MCF 10A (cell line): ENCODE measurements at regions of chr6 and their contacts with region 1.

Region 1: GRCh38 chr6:136550330-136551071 is at the start of gene MAP7:
- DNase-seq: peak; percentile 86
- H3K4me3 Mint-ChIP-seq: peak within 1 kb of the TSS; percentile 72
- H3K27ac Mint-ChIP-seq: peak within 1 kb of the TSS; percentile 57
- H3K4me1 Mint-ChIP-seq: peaks cover 8% of the 10 kb centered on the region
- H3K27me3 Mint-ChIP-seq: no peaks in the 10 kb centered on the region
- CTCF ChIP-seq: peak; percentile 97
- total RNA-seq, gene MAP7: 15.4 and 17.2 TPM in 2 replicates

Region 2: GRCh38 chr6:135451693-135452092 is 1098.8 kb before region 1 on chr6:
- CTCF ChIA-PET with region 1: interaction called, 3 read pairs
- POLR2A ChIA-PET with region 1: no interaction called
- intact Hi-C with region 1: loop called (anchors 2 kb)
- DNase-seq: peak; percentile 57
- H3K4me3 Mint-ChIP-seq: no peak overlapping the region
- H3K27ac Mint-ChIP-seq: no peak overlapping the region
- H3K4me1 Mint-ChIP-seq: no peaks in the 10 kb centered on the region
- H3K27me3 Mint-ChIP-seq: no peaks in the 10 kb centered on the region
- CTCF ChIP-seq: peak; percentile 61

Region 3: GRCh38 chr6:135506270-135506997 is 1044.1 kb before region 1 on chr6:
- CTCF ChIA-PET with region 1: no interaction called
- POLR2A ChIA-PET with region 1: no interaction called
- intact Hi-C with region 1: loop called (anchors 2 kb)
- DNase-seq: peak; percentile 66
- H3K4me3 Mint-ChIP-seq: no peak overlapping the region
- H3K27ac Mint-ChIP-seq: no peak overlapping the region
- H3K4me1 Mint-ChIP-seq: no peaks in the 10 kb centered on the region
- H3K27me3 Mint-ChIP-seq: no peaks in the 10 kb centered on the region
- CTCF ChIP-seq: peak; percentile 43

Region 4: DNA sequence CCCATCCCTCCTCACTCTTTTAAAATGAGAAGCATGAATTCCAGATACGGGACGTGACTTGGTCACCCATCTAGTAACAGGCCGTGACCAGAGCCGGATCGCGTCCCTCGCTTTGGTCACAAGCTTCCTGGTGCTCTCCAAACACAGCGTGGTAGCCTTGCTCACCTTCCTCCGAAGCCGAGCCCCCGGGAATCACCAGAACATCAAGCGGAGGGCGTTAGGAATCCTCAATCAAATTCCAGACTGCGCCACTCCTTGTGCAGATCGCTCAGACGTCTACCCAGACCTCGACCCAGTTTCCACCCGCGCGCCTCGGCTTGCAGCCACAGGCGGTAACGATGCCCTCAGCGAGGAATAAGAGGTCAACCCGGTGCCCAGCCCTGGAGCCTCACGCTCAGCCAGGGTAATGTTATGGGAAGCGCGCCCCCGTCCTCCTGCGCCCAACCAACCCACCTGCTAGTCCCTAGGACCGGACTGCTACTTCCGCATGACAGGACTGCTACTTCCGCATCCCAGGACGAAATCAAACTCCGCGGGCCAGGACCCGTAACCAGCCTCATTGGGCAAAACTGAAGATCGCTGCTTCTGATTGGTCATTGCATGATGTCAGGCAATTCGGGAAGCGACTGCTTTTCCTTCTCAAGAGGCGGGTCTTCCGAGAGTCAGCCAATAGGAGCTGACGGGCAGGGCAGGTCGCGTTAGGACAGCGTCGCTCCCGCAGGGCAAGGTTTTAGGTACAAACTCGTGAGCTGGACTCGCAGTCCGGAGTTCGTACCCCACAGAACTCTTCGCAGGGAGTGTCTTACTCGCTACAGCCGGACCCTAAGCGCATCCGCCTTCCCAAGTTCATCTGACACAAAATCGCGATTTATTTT is 300.5 kb before region 1 on chr6 and contains the start of gene MTFR2:
- CTCF ChIA-PET with region 1: interaction called, 10 read pairs
- POLR2A ChIA-PET with region 1: interaction called, 10 read pairs
- intact Hi-C with region 1: loop called (anchors 2 kb)
- DNase-seq: peak; percentile 100
- H3K4me3 Mint-ChIP-seq: peak within 1 kb of the TSS; percentile 97
- H3K27ac Mint-ChIP-seq: peak within 1 kb of the TSS; percentile 82
- H3K4me1 Mint-ChIP-seq: peaks cover 12% of the 10 kb centered on the region
- H3K27me3 Mint-ChIP-seq: no peaks in the 10 kb centered on the region
- CTCF ChIP-seq: no peak
- total RNA-seq, gene MTFR2: 5.2 and 6.0 TPM in 2 replicates

Region 5: GRCh38 chr6:136362421-136363356 is 187.8 kb before region 1 on chr6:
- CTCF ChIA-PET with region 1: interaction called, 11 read pairs
- POLR2A ChIA-PET with region 1: no interaction called
- intact Hi-C with region 1: no loop called
- DNase-seq: no peak
- H3K4me3 Mint-ChIP-seq: no peak overlapping the region
- H3K27ac Mint-ChIP-seq: no peak overlapping the region
- H3K4me1 Mint-ChIP-seq: no peaks in the 10 kb centered on the region
- H3K27me3 Mint-ChIP-seq: no peaks in the 10 kb centered on the region
- CTCF ChIP-seq: no peak

Region 6: GRCh38 chr6:136378886-136379285 is 171.6 kb before region 1 on chr6:
- CTCF ChIA-PET with region 1: interaction called, 15 read pairs
- POLR2A ChIA-PET with region 1: no interaction called
- intact Hi-C with region 1: loop called (anchors 1 kb)
- DNase-seq: peak; percentile 39
- H3K4me3 Mint-ChIP-seq: no peak overlapping the region
- H3K27ac Mint-ChIP-seq: no peak overlapping the region
- H3K4me1 Mint-ChIP-seq: no peaks in the 10 kb centered on the region
- H3K27me3 Mint-ChIP-seq: no peaks in the 10 kb centered on the region
- CTCF ChIP-seq: peak; percentile 27

Region 7: DNA sequence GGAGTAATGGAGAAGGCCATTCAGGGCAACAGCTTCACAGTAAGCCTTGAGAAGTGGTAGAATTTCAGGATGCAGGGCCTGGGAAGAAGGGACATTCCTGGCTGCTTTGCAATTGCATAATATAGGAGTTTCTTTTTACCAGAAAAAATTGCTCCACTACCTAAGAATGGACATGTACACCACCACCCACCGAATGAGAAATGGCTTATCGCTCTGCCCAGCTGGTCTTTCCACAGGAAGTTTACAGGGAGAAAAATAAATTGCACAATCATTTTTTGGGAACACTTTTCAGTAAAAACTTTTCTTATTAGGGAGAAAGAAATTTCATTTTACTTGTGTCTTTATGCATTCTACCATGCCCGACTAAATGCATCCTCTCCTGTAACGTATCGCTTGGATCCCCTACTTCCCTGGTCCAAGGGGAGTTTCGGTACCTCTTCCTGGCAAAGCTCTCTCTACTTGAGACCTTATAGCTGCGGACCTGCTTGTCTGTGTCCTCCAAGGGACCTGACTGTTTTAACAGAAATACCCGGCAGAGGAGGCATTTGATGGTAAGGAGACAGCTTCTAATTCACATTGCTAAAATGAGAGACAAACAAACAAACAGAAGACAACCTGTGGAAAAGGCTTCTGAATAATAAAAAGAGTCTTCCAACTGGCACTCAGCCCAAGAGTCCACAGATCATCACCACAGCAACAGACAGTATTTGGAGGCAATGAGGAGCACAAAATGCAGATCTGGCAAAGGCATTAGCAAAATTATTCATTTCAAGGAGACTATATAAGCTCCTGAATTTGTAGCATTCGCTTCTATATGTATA is 187.6 kb after region 1 on chr6:
- CTCF ChIA-PET with region 1: no interaction called
- POLR2A ChIA-PET with region 1: no interaction called
- intact Hi-C with region 1: no loop called
- DNase-seq: peak; percentile 69
- H3K4me3 Mint-ChIP-seq: no peak overlapping the region
- H3K27ac Mint-ChIP-seq: peak overlapping the region; percentile 54
- H3K4me1 Mint-ChIP-seq: peaks cover 15% of the 10 kb centered on the region
- H3K27me3 Mint-ChIP-seq: no peaks in the 10 kb centered on the region
- CTCF ChIP-seq: no peak

Region 8: DNA sequence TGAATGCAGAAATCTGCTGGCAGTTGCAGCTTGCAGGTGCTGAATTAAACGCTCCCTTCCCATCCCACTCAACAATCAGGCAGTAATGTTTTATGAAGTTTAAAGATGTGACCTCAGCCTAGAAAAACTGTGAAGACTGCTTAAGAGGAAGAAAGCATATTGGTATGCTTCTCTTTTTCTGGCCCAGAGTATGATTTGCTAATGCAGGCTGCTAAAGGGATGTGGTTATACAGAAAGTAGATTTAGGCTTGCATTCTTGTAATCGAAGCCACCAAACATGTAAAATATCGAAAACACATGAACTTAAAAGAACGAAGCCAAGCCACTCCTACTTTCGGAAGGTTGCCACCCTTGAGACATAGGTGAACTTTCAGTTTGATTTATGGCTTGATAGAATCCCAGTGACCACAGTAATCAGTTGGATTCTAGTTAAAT is 201.0 kb after region 1 on chr6:
- CTCF ChIA-PET with region 1: no interaction called
- POLR2A ChIA-PET with region 1: no interaction called
- intact Hi-C with region 1: no loop called
- DNase-seq: no peak
- H3K4me3 Mint-ChIP-seq: no peak overlapping the region
- H3K27ac Mint-ChIP-seq: no peak overlapping the region
- H3K4me1 Mint-ChIP-seq: no peaks in the 10 kb centered on the region
- H3K27me3 Mint-ChIP-seq: no peaks in the 10 kb centered on the region
- CTCF ChIP-seq: no peak